Activated B cell treated with CpG ODN at 0.5 μM for 24 hours (primary cell): ENCODE measurements at regions of chr7 and their contacts with region 1.

Region 1: DNA sequence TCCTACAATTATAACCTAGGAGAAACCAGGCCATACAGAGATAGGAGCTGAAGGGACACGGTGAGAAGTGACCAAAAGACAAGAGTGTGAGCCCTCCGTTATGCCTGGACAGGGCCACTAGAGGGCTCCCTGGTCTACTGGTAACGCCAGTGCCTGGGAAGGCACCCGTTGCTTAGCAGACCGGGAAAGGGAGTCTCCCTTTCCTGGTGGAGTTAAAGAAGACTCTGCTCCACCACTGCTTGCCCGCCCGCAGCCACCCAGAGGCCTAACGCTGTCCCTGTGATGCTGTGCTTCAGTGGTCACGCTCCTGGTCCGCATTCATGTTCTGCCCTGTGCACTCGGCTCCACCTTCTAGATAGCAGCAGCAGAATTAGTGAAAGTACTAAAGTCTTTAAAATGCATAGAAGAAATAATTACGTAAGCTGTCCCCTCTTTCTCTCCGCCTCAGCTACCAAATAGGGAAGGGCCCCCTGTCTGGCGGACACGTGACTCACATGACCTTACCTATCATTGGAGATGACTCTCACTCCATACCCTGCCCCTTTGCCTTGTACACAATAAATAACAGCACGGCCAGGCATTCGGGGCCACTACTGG is 34.8 kb downstream of the GRID2IP start:
- DNase-seq: peak; percentile 42
- ATAC-seq: peak; percentile 78
- H3K4me3 Mint-ChIP-seq: peak overlapping the region; percentile 81
- H3K27ac Mint-ChIP-seq: peak overlapping the region; percentile 78
- H3K4me1 Mint-ChIP-seq: peaks cover 18% of the 10 kb centered on the region
- H3K27me3 Mint-ChIP-seq: no peaks in the 10 kb centered on the region
- CTCF ChIP-seq: peak; percentile 76

Region 2: DNA sequence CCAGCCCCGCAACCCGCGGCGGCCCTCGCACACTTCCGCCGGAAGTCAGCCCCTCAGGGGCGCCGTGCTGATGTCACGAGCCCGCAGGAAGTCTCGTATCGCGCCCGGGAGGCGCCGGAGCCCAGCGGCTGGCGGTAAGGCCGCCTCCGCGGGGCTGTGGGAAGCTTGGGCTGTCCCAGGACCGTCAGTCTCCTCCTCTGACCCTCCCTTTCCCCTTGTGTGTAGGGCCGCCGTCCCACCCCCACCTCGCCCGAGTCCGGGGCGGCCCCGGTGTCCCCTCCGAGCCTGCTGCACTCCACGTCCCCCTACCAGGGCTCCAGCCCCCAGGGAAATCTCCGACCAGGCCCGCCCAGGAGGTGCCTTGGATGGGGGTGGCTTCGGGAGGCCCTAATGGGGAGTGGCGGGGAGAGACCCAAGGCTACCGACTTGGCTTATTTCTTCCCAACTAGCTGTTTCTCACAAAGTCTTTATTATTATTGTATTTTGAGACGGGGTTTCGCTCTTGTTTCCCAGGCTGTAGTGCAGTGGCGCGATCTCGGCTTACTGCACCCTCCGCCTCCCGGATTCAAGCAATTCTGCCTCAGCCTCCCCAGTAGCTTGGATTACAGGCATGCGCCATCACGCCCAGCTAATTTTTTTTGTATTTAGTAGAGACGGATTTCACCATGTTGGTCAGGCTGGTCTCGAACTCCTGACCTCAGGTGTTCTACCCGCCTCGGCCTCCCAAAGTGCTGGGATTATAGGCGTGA is 61.1 kb after region 1 on chr7 and contains the start of gene ZDHHC4:
- CTCF ChIA-PET with region 1: interaction called, 5 read pairs
- POLR2A ChIA-PET with region 1: no interaction called
- intact Hi-C with region 1: loop called (anchors 1 kb)
- DNase-seq: peak; percentile 86
- ATAC-seq: peak; percentile 88
- H3K4me3 Mint-ChIP-seq: peak within 1 kb of the TSS; percentile 88
- H3K27ac Mint-ChIP-seq: peak within 1 kb of the TSS; percentile 89
- H3K4me1 Mint-ChIP-seq: peaks cover 26% of the 10 kb centered on the region
- H3K27me3 Mint-ChIP-seq: no peaks in the 10 kb centered on the region
- CTCF ChIP-seq: no peak
- total RNA-seq, gene ZDHHC4: 33.2 and 37.4 TPM in 2 replicates

Region 3: GRCh38 chr7:6934986-6935385 is 418.5 kb after region 1 on chr7:
- CTCF ChIA-PET with region 1: no interaction called
- POLR2A ChIA-PET with region 1: no interaction called
- intact Hi-C with region 1: loop called (anchors 2 kb)
- DNase-seq: no peak
- ATAC-seq: no peak
- H3K4me3 Mint-ChIP-seq: no peak overlapping the region
- H3K27ac Mint-ChIP-seq: no peak overlapping the region
- H3K4me1 Mint-ChIP-seq: no peaks in the 10 kb centered on the region
- H3K27me3 Mint-ChIP-seq: peaks cover 2% of the 10 kb centered on the region
- CTCF ChIP-seq: no peak

Region 4: DNA sequence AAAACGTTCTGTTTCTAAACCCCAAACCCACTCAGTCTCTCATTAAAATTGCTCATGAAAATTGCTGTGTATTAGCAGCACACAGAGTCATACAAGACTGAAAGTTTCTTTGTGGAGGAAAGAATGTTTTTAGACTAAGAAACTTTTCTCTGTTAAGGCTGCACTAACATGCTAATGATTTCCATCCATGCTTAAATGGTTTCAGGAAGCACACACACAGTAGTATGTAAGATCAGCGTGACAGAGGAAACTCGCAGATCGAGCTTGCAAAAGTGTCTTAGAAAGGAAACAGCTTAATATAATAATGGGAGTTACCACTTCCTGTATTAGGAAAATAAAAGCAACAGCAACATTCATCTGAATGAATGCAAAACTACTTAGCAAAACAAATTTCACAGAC is 1632.7 kb after region 1 on chr7:
- CTCF ChIA-PET with region 1: no interaction called
- POLR2A ChIA-PET with region 1: no interaction called
- intact Hi-C with region 1: no loop called
- DNase-seq: no peak
- ATAC-seq: peak; percentile 62
- H3K4me3 Mint-ChIP-seq: peak overlapping the region; percentile 35
- H3K27ac Mint-ChIP-seq: peak overlapping the region; percentile 53
- H3K4me1 Mint-ChIP-seq: peaks cover 28% of the 10 kb centered on the region
- H3K27me3 Mint-ChIP-seq: no peaks in the 10 kb centered on the region
- CTCF ChIP-seq: no peak